Calu3 (cell line): ENCODE measurements at regions of chr17 and their contacts with region 1.

Region 1: GRCh38 chr17:39738931-39739884 is 1.5 kb downstream of the GRB7 start:
- DNase-seq: peak; percentile 100
- H3K4me3 Mint-ChIP-seq: peak overlapping the region; percentile 77
- H3K27ac Mint-ChIP-seq: peak overlapping the region; percentile 21
- H3K4me1 Mint-ChIP-seq: peaks cover 54% of the 10 kb centered on the region
- H3K27me3 Mint-ChIP-seq: no peaks in the 10 kb centered on the region
- CTCF ChIP-seq: no peak

Region 2: GRCh38 chr17:38982858-38983746 is 756.1 kb before region 1 on chr17:
- CTCF ChIA-PET with region 1: no interaction called
- intact Hi-C with region 1: no loop called
- DNase-seq: peak; percentile 85
- H3K4me3 Mint-ChIP-seq: no peak overlapping the region
- H3K27ac Mint-ChIP-seq: no peak overlapping the region
- H3K4me1 Mint-ChIP-seq: no peaks in the 10 kb centered on the region
- H3K27me3 Mint-ChIP-seq: peaks cover 44% of the 10 kb centered on the region
- CTCF ChIP-seq: peak; percentile 98

Region 3: DNA sequence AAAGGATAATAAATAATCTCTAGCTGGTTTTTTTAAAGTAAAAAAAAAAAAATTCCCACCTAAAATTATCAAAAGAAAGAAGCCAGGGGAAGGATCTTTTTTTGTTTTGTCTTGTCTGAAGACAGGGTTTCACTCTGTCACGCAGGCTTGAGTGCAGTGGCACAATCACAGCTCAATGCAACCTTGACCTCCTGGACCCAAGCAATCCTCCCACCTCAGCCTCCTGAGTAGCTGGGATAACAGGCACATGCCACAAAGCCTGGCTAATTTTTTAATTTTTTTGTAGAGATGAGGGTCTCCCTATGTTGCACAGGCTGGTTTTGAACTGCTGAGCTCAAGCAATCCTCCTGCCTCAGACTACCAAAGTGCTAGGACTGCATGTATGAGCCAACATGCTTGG is 435.0 kb before region 1 on chr17:
- CTCF ChIA-PET with region 1: no interaction called
- intact Hi-C with region 1: no loop called
- DNase-seq: no peak
- H3K4me3 Mint-ChIP-seq: no peak overlapping the region
- H3K27ac Mint-ChIP-seq: no peak overlapping the region
- H3K4me1 Mint-ChIP-seq: no peaks in the 10 kb centered on the region
- H3K27me3 Mint-ChIP-seq: no peaks in the 10 kb centered on the region
- CTCF ChIP-seq: no peak

Region 4: DNA sequence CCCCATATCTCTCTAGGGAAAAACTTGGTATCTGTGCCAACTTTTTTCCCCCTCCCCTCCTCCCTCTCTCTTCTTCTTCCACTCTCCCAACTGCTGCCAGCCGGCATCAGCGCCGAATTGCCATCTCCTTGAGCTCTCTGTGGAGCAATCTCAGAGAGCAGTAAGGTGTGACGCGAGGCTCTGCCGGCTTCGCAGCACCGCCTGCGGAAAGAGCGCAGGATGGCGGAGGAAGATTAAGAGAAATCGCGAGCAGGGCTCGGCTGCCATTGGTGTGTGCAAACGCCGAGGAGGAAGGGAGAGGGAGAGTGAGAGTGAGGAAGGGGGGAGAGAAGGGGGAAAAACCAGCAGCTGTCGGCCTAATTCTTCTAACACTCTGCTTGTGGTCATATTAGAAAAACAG is 175.7 kb before region 1 on chr17:
- CTCF ChIA-PET with region 1: interaction called, 16 read pairs
- intact Hi-C with region 1: no loop called
- DNase-seq: no peak
- H3K4me3 Mint-ChIP-seq: no peak overlapping the region
- H3K27ac Mint-ChIP-seq: no peak overlapping the region
- H3K4me1 Mint-ChIP-seq: no peaks in the 10 kb centered on the region
- H3K27me3 Mint-ChIP-seq: no peaks in the 10 kb centered on the region
- CTCF ChIP-seq: no peak

Region 5: GRCh38 chr17:39889200-39889599 is 150.0 kb after region 1 on chr17:
- CTCF ChIA-PET with region 1: interaction called, 679 read pairs
- intact Hi-C with region 1: loop called (anchors 1 kb)
- DNase-seq: peak; percentile 82
- H3K4me3 Mint-ChIP-seq: no peak overlapping the region
- H3K27ac Mint-ChIP-seq: no peak overlapping the region
- H3K4me1 Mint-ChIP-seq: peaks cover 26% of the 10 kb centered on the region
- H3K27me3 Mint-ChIP-seq: peaks cover 22% of the 10 kb centered on the region
- CTCF ChIP-seq: no peak

Region 6: GRCh38 chr17:39908789-39909352 is 169.7 kb after region 1 on chr17:
- CTCF ChIA-PET with region 1: interaction called, 679 read pairs
- intact Hi-C with region 1: no loop called
- DNase-seq: peak; percentile 67
- H3K4me3 Mint-ChIP-seq: no peak overlapping the region
- H3K27ac Mint-ChIP-seq: no peak overlapping the region
- H3K4me1 Mint-ChIP-seq: no peaks in the 10 kb centered on the region
- H3K27me3 Mint-ChIP-seq: no peaks in the 10 kb centered on the region
- CTCF ChIP-seq: no peak

Region 7: GRCh38 chr17:39939588-39940419 is 200.6 kb after region 1 on chr17:
- CTCF ChIA-PET with region 1: interaction called, 1,335 read pairs
- intact Hi-C with region 1: no loop called
- DNase-seq: peak; percentile 76
- H3K4me3 Mint-ChIP-seq: no peak overlapping the region
- H3K27ac Mint-ChIP-seq: no peak overlapping the region
- H3K4me1 Mint-ChIP-seq: peaks cover 12% of the 10 kb centered on the region
- H3K27me3 Mint-ChIP-seq: peaks cover 63% of the 10 kb centered on the region
- CTCF ChIP-seq: no peak

Region 8: GRCh38 chr17:39972271-39972670 is 233.1 kb after region 1 on chr17:
- CTCF ChIA-PET with region 1: interaction called, 1,335 read pairs
- intact Hi-C with region 1: no loop called
- DNase-seq: no peak
- H3K4me3 Mint-ChIP-seq: no peak overlapping the region
- H3K27ac Mint-ChIP-seq: no peak overlapping the region
- H3K4me1 Mint-ChIP-seq: peaks cover 17% of the 10 kb centered on the region
- H3K27me3 Mint-ChIP-seq: peaks cover 84% of the 10 kb centered on the region
- CTCF ChIP-seq: no peak

Region 9: DNA sequence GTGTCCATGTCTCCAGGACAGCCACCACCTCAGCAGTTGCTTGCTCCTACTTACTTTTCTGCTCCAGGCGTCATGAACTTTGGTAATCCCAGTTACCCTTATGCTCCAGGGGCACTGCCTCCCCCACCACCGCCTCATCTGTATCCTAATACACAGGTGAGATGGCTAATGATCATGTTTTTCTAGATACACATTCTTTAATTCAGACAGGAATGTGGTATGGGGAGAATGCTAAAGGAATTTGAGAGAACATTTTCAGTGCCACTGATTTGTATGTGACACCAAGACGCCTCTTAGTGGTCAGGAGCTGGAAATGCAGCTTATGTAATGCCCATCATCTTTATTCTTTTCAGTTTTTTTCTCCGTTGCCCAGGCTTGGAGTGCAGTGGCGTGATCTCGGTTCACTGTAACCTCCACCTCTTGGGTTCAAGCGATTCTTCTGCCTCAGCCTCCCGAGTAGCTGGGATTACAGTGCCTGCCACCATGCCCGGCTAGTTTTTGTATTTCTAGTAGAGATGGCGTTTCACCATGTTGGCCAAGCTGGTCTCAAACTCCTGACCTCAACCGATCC is 429.1 kb after region 1 on chr17:
- CTCF ChIA-PET with region 1: no interaction called
- intact Hi-C with region 1: no loop called
- DNase-seq: peak; percentile 88
- H3K4me3 Mint-ChIP-seq: no peak overlapping the region
- H3K27ac Mint-ChIP-seq: peak overlapping the region; percentile 4
- H3K4me1 Mint-ChIP-seq: peaks cover 17% of the 10 kb centered on the region
- H3K27me3 Mint-ChIP-seq: no peaks in the 10 kb centered on the region
- CTCF ChIP-seq: no peak

Region 10: GRCh38 chr17:40331743-40332641 is 592.8 kb after region 1 on chr17:
- CTCF ChIA-PET with region 1: no interaction called
- intact Hi-C with region 1: no loop called
- DNase-seq: peak; percentile 87
- H3K4me3 Mint-ChIP-seq: peak overlapping the region; percentile 15
- H3K27ac Mint-ChIP-seq: peak overlapping the region; percentile 3
- H3K4me1 Mint-ChIP-seq: peaks cover 71% of the 10 kb centered on the region
- H3K27me3 Mint-ChIP-seq: no peaks in the 10 kb centered on the region
- CTCF ChIP-seq: peak; percentile 47